Adrenal gland (tissue), 19 donors: ENCODE measurements at regions of chr7 and their contacts with region 1.

Region 1: DNA sequence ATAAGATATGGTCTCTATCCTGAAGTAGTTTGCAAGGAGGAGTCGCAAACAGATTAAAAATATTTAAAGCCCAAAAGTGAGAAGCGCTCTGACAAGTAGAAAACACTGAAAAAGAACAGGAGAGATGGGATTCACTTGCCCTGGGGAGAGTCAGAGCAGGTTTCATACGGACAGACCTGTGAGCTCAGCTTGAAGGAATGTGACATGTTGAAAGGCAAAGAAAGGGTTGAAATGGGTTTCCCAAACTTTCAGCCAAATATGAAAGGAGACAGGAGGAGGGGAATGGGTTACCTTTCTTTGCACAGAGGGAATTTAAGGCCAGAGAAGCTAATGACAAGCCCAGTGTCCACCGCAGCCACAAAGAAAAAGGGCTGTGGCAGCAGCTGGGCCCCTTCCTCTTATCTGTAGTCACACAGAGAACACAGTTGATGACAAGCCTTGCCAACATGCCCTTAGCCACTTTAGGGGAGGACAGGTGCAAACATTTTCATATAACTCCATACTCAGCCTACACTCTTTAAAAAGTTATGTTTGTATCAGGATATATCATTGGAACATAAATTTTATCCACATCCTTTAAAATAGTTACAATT is 14.9 kb downstream of the HOXA1 start:
- DNase-seq: no peak
- H3K4me3 ChIP-seq: no peak overlapping the region
- H3K27ac ChIP-seq: no peak overlapping the region
- H3K4me1 ChIP-seq: no peaks in the 10 kb centered on the region
- H3K27me3 ChIP-seq: no peaks in the 10 kb centered on the region
- CTCF ChIP-seq: no peak
- POLR2A ChIP-seq: no peak

Region 2: GRCh38 chr7:26989897-26990670 is 90.9 kb before region 1 on chr7:
- intact Hi-C with region 1: loop called in 1 of 2 experiments (anchors 5 kb)
- DNase-seq: no peak
- H3K4me3 ChIP-seq: no peak overlapping the region
- H3K27ac ChIP-seq: no peak overlapping the region
- H3K4me1 ChIP-seq: no peaks in the 10 kb centered on the region
- H3K27me3 ChIP-seq: no peaks in the 10 kb centered on the region
- CTCF ChIP-seq: no peak
- POLR2A ChIP-seq: no peak